Tibial artery (tissue), 4 donors: ENCODE measurements at regions of chr3 and their contacts with region 1.

Region 1: GRCh38 chr3:5122030-5122740 is at the start of gene ARL8B:
- DNase-seq: peak; percentile 86 to 94
- H3K4me3 ChIP-seq: peak within 1 kb of the TSS; percentile 95 to 100
- H3K27ac ChIP-seq: peak within 1 kb of the TSS; percentile 94 to 96
- H3K4me1 ChIP-seq: peaks cover 0 to 46% (median 27%) of the 10 kb centered on the region in 4 donors
- H3K27me3 ChIP-seq: no peaks in the 10 kb centered on the region
- CTCF ChIP-seq: peak; percentile 94 to 97

Region 2: GRCh38 chr3:5144316-5145011 is 22.3 kb after region 1 on chr3:
- intact Hi-C with region 1: no loop called
- DNase-seq: no peak
- H3K4me3 ChIP-seq: no peak overlapping the region
- H3K27ac ChIP-seq: no peak overlapping the region
- H3K4me1 ChIP-seq: peaks cover 0 to 54% (median 21%) of the 10 kb centered on the region in 4 donors
- H3K27me3 ChIP-seq: no peaks in the 10 kb centered on the region
- CTCF ChIP-seq: no peak

Region 3: DNA sequence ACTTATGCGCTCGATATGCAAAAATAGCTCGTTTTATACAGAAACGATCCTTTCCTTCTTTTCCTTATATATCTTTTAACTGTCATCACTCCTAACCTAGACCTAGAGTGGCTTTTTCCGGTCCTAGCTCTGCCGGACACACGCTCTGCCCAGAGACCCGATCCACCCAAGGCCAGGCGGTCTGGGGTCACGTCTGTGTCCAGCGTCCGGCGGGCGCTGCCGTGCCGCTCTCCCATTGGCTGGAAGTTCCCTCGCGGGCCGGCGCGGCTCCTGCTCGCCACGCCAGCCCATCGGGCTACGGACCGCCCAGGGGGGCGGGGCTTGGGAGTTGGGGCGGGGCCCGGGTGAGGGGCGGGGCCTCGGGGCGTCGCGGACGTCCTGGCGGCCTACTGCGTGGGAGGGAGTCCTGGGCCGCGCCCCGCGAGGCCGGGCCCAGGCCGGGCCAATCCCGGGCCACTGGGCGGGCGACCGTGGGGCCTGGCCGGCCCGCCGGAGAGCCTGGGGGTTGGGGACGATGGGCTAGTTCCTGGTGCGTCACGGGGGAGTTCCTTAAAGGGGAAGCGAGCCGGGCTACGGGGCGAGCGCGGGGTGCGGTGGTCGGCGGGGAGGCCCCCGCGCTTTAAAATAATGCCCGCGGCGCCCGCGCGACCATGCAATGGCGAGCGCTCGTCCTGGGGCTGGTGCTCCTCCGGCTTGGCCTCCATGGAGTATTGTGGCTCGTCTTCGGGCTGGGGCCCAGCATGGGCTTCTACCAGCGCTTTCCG is 65.2 kb after region 1 on chr3 and contains the start of gene EDEM1:
- intact Hi-C with region 1: loop called (anchors 5 kb)
- DNase-seq: peak; percentile 90 to 98
- H3K4me3 ChIP-seq: peak within 1 kb of the TSS; percentile 79 to 95
- H3K27ac ChIP-seq: peak within 1 kb of the TSS; percentile 94 to 96
- H3K4me1 ChIP-seq: peaks cover 0 to 45% (median 15%) of the 10 kb centered on the region in 4 donors
- H3K27me3 ChIP-seq: no peaks in the 10 kb centered on the region
- CTCF ChIP-seq: peak in 1 of 2 experiments; percentile 12